CD4-positive, alpha-beta T cell (primary cell): ENCODE measurements at regions of chr12 and their contacts with region 1.

Region 1: GRCh38 chr12:71636704-71637115 is 26.9 kb downstream of the ZFC3H1 start:
- DNase-seq: peak in 3 of 14 experiments; percentile 65 to 78 (median 77)
- ATAC-seq: peak; percentile 79
- H3K4me3 ChIP-seq: no peak overlapping the region
- H3K4me3 Mint-ChIP-seq: no peak overlapping the region
- H3K27ac ChIP-seq: no peak overlapping the region
- H3K27ac Mint-ChIP-seq: peak overlapping the region; percentile 5
- H3K4me1 ChIP-seq: no peaks in the 10 kb centered on the region
- H3K4me1 Mint-ChIP-seq: peaks cover 27% of the 10 kb centered on the region
- H3K27me3 ChIP-seq: no peaks in the 10 kb centered on the region
- H3K27me3 Mint-ChIP-seq: no peaks in the 10 kb centered on the region
- CTCF ChIP-seq: peak; percentile 89

Region 2: DNA sequence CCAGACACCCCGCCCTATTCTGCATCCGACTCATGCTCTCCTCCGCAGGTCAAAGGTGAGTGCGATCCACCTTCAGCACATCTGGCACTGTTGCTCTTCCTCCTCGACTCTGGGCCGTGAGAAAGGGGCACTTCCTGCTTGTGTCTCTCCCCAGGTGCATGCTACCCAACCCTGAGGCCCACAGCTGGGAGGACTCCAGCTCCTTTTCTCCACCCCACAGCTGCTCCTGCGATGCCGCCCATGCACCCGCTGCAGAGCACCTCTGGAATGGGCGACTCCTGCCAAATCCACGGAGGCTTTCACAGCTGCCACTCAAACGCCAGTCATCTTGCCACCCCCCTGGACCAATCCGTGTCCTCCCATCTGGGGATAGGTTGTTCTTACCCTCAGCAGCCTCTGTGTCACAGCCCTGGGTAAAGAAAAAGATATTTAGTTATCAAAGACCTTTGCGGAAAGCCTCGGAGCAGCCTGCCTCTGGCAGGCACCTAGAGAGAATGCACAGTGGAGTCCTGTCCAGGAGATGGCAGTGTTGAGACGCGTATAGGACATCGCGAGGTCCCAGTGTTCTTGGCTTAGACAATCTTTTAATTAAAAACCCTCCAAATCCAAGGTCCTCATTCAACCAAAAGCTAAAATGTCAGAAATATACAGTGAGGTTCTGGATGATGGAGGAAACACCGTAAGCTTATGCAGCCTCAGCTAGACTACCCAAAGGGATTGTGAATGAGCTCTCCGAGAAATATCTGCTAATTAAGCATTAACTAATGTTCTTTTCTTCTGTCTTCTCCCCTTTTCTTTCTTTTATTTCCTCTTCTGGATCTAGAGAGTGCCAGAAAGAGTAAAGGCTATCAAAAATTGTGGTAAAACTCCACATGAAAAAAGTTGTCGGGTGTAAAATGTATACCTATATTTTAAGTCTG is 1757.4 kb before region 1 on chr12:
- CTCF ChIA-PET with region 1: no interaction called
- POLR2A ChIA-PET with region 1: no interaction called
- intact Hi-C with region 1: loop called in 1 of 2 experiments (anchors 10 kb)
- DNase-seq: peak; percentile 36 to 78 (median 52)
- ATAC-seq: peak; percentile 92
- H3K4me3 ChIP-seq: no peak overlapping the region
- H3K4me3 Mint-ChIP-seq: no peak overlapping the region
- H3K27ac ChIP-seq: no peak overlapping the region
- H3K27ac Mint-ChIP-seq: no peak overlapping the region
- H3K4me1 ChIP-seq: no peaks in the 10 kb centered on the region
- H3K4me1 Mint-ChIP-seq: peaks cover 7% of the 10 kb centered on the region
- H3K27me3 ChIP-seq: peaks cover 0 to 2% of the 10 kb centered on the region in 2 experiments
- H3K27me3 Mint-ChIP-seq: peaks cover 45% of the 10 kb centered on the region
- CTCF ChIP-seq: peak; percentile 88

Region 3: DNA sequence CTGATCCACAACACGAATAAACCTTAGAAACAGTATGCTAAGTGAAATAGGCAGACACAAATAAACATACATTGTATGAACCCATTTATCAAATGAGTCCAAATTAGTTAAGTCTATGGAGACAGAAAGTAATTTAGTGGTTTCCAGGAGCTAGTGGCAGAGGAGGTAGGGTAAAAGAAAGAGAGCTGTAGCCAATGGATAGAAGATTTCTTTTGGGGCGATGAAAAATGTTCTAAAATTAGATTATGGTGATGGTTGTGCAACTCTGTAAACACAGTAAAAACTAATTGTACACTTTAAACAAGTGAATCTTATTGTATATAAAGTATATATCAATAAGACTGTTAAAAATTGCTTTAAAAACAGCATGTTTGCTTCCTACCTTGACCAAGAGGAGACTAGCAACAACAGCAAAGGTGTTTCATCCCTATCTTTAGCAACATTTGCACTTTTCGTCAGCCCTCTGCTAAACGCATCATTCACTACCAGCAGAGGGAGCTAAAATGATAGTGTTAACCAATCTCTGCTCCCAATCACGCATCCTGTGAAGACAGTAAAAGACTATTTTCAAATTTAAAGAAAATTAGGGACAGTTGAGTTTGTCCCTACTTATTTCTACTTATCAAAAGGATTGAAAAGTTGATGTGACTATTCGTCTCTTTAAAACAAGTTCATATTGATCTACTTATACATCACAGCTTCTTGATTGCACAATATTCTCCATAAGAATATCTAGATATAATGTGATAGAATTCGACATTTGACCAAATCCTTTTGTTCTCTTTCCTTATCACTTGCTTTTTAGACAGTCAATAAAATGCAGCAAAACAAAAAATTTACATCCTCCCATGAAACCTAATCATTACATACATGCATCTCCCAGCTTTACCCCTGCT is 221.1 kb before region 1 on chr12:
- CTCF ChIA-PET with region 1: no interaction called
- POLR2A ChIA-PET with region 1: interaction called, 6 read pairs
- intact Hi-C with region 1: loop called (anchors 1 to 2 kb)
- DNase-seq: peak in 5 of 14 experiments; percentile 10 to 71 (median 56)
- ATAC-seq: peak; percentile 52
- H3K4me3 ChIP-seq: no peak overlapping the region
- H3K4me3 Mint-ChIP-seq: no peak overlapping the region
- H3K27ac ChIP-seq: no peak overlapping the region
- H3K27ac Mint-ChIP-seq: no peak overlapping the region
- H3K4me1 ChIP-seq: no peaks in the 10 kb centered on the region
- H3K4me1 Mint-ChIP-seq: no peaks in the 10 kb centered on the region
- H3K27me3 ChIP-seq: peaks cover 0 to 5% of the 10 kb centered on the region in 2 experiments
- H3K27me3 Mint-ChIP-seq: peaks cover 6% of the 10 kb centered on the region
- CTCF ChIP-seq: peak; percentile 79

Region 4: DNA sequence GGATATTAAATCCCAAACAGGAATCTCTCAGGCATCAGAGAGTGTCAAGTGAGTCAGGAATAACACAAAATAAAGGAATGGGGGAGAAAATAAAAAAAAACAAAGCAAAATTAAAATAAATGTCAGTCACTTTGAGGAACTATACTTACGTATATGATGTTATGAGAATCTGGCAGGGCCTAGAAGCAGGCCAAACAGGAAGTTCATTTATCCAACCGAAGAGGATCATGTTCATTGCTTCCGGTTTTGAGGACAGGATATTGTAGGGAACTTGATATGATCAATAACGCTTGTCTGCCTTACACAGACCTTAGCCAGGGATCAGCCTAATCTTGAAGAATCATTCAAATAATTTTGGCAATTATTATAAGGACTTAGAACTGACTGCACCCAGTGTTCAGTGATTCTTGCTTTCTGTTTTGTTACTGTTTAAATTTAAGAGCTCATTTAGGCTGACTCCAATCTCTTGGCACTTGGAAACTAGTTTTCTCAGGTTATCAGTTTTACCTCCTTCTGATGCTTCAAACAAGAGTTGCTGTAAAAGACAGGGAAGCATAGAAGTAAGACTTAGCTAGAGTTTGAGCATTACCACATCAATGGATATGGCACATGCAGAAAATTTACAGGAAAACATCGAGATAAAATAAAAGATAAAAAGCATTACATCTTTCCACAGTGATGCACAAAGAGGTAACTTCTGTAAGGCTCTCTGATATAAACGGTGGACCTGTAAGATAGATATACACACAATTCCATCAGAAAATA is 26.5 kb before region 1 on chr12:
- CTCF ChIA-PET with region 1: interaction called, 3 read pairs
- POLR2A ChIA-PET with region 1: no interaction called
- intact Hi-C with region 1: loop called in 1 of 2 experiments (anchors 2 kb)
- DNase-seq: peak in 3 of 14 experiments; percentile 25 to 33 (median 29)
- ATAC-seq: peak; percentile 74
- H3K4me3 ChIP-seq: no peak overlapping the region
- H3K4me3 Mint-ChIP-seq: peak overlapping the region; percentile 22
- H3K27ac ChIP-seq: peak overlapping the region; percentile 47 to 49
- H3K27ac Mint-ChIP-seq: peak overlapping the region; percentile 84
- H3K4me1 ChIP-seq: no peaks in the 10 kb centered on the region
- H3K4me1 Mint-ChIP-seq: peaks cover 42% of the 10 kb centered on the region
- H3K27me3 ChIP-seq: no peaks in the 10 kb centered on the region
- H3K27me3 Mint-ChIP-seq: no peaks in the 10 kb centered on the region
- CTCF ChIP-seq: no peak

Region 5: GRCh38 chr12:71896205-71896882 is 259.6 kb after region 1 on chr12:
- CTCF ChIA-PET with region 1: no interaction called
- POLR2A ChIA-PET with region 1: no interaction called
- intact Hi-C with region 1: loop called in 1 of 2 experiments (anchors 10 kb)
- DNase-seq: no peak
- ATAC-seq: no peak
- H3K4me3 ChIP-seq: no peak overlapping the region
- H3K4me3 Mint-ChIP-seq: no peak overlapping the region
- H3K27ac ChIP-seq: no peak overlapping the region
- H3K27ac Mint-ChIP-seq: peak overlapping the region; percentile 20
- H3K4me1 ChIP-seq: no peaks in the 10 kb centered on the region
- H3K4me1 Mint-ChIP-seq: peaks cover 9% of the 10 kb centered on the region
- H3K27me3 ChIP-seq: no peaks in the 10 kb centered on the region
- H3K27me3 Mint-ChIP-seq: no peaks in the 10 kb centered on the region
- CTCF ChIP-seq: no peak